Activated CD4-positive, alpha-beta T cell treated with anti-CD3 and anti-CD28 coated beads, Interleukin-2, amount 10 ng/mL, durations not matched to agents 24 days and 14 days (primary cell): ENCODE measurements at regions of chr19 and their contacts with region 1.

Region 1: GRCh38 chr19:861763-862580 is 2.5 kb downstream of the CFD start:
- DNase-seq: peak; percentile 86
- H3K4me3 Mint-ChIP-seq: peak overlapping the region; percentile 79
- H3K27ac Mint-ChIP-seq: peak overlapping the region; percentile 72
- H3K4me1 Mint-ChIP-seq: peaks cover 5% of the 10 kb centered on the region
- H3K27me3 Mint-ChIP-seq: peaks cover 12% of the 10 kb centered on the region

Region 2: DNA sequence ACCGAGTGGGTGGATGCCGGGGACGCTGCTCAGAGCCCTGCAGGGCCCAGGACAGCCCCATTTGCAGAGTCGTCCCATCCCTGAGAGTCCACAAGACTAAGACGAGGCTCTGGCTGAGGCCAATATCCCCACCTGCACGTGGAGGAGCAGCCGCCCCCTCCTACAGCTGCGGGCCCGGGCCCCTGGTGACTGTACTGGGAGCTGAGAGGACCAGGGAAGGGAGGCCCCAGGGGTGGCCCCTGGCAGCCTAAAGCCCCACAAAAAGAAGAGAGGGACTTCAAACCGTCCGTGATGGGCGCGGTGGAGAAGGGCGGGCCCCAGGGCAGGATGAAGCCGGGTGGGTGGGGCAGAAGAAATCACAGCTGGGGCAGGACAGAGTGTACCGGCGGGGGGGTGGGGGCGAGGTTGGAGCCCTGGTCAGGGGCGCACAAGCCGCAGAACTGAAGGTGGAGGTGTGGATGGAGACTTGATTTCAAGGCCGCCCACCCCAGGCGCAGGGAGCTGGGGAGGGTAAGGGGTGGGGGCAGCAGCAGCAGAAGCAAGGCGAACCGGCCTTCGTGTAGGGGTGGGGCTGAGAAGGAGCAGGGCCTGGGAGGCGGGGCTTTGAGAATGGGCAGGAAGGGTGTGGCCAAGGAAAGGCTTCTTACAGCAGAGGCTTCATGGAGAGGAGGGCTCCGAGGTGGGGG is 10.4 kb after region 1 on chr19:
- intact Hi-C with region 1: loop called (anchors 1 kb)
- DNase-seq: peak; percentile 96
- H3K4me3 Mint-ChIP-seq: peak overlapping the region; percentile 76
- H3K27ac Mint-ChIP-seq: peak overlapping the region; percentile 62
- H3K4me1 Mint-ChIP-seq: peaks cover 11% of the 10 kb centered on the region
- H3K27me3 Mint-ChIP-seq: no peaks in the 10 kb centered on the region

Region 3: DNA sequence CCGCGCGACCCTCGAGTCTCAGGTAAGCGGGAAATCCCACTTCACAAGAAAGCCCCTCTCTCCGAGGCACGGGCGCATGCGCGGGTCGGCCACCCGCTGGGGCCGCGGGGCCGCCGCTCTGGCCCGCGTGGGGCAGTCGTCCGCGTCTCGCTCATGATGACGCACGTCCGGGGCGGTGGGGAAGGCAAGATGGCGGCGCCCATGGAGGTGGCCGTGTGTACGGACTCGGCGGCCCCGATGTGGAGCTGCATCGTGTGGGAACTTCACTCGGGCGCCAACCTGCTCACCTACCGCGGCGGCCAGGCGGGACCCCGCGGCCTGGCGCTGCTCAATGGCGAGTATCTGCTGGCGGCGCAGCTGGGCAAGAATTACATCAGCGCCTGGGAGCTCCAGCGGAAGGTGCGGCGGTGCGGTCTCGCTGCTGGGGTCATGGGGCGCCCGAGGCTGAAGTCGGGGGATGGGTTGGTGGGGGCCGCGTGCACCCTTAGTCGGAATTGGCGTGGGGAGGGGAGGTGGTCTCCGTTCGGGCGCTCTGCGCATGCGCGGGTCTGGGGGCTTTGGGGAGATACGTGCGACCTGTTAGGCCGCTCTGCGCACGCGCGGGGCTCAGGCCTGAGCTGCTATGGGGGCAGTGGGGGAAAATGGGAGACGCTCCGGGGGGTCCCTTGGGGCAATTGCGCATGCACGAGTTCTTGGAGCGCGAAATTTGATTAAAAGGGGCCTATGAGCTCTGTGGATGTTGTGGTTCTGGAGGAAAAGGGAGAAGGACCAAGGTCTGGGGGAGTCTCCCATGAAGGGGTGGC is 122.4 kb after region 1 on chr19 and contains the start of gene WDR18:
- intact Hi-C with region 1: loop called (anchors 2 kb)
- DNase-seq: peak; percentile 98
- H3K4me3 Mint-ChIP-seq: peak within 1 kb of the TSS; percentile 98
- H3K27ac Mint-ChIP-seq: peak within 1 kb of the TSS; percentile 94
- H3K4me1 Mint-ChIP-seq: peaks cover 10% of the 10 kb centered on the region
- H3K27me3 Mint-ChIP-seq: no peaks in the 10 kb centered on the region
- total RNA-seq, gene WDR18: 104 and 111 TPM in 2 replicates